Activated CD4-positive, alpha-beta memory T cell treated with anti-CD3 and anti-CD28 coated beads for 36 hours (primary cell): ENCODE measurements at regions of chrX and their contacts with region 1.

Region 1: GRCh38 chrX:71532753-71533425 is at the start of gene OGT:
- DNase-seq: peak; percentile 95
- H3K4me3 Mint-ChIP-seq: peak within 1 kb of the TSS; percentile 97
- H3K27ac Mint-ChIP-seq: peak within 1 kb of the TSS; percentile 98
- H3K4me1 Mint-ChIP-seq: peaks cover 21% of the 10 kb centered on the region
- H3K27me3 Mint-ChIP-seq: no peaks in the 10 kb centered on the region
- total RNA-seq, gene OGT: 280 to 304 TPM

Region 2: DNA sequence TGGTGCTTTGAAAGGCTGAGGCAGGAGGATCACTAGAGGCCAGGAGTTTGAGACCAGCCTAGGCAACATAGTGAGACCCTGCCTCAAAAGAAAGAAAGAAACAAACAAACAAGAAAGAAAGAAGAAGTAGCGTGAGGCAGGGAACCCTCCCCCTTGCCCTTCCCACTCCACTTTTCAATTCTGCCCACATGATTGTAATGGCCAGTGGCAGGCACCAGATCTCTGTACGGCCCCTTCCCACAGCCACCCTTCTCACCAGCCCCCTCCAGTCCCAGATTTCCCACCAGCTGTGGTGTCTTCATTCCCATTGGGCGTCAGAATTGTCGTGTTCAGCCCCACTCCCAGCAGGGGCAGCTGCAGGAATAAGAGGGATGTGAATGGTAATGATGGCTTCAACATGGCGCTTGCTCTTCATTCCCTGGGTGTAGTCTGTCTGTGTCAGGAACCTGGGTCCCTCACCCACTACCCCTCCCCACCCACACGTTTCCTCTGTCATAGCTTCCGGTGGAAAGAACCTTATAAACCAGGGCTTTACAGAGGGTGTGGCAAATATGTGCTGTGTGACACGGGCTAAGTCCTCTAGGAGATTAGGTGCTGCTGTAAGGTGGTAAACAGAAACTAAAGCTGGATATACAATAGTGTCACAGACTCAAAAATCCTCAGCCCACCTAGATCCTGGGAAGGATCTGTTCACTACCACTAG is 421.6 kb before region 1 on chrX and contains the start of gene IL2RG:
- CTCF ChIA-PET with region 1: no interaction called
- POLR2A ChIA-PET with region 1: interaction called, 4 read pairs
- intact Hi-C with region 1: loop called (anchors 5 kb)
- DNase-seq: peak; percentile 85
- H3K4me3 Mint-ChIP-seq: peak within 1 kb of the TSS; percentile 99
- H3K27ac Mint-ChIP-seq: peak within 1 kb of the TSS; percentile 98
- H3K4me1 Mint-ChIP-seq: peaks cover 38% of the 10 kb centered on the region
- H3K27me3 Mint-ChIP-seq: no peaks in the 10 kb centered on the region
- total RNA-seq, gene IL2RG: 289 to 290 TPM

Region 3: DNA sequence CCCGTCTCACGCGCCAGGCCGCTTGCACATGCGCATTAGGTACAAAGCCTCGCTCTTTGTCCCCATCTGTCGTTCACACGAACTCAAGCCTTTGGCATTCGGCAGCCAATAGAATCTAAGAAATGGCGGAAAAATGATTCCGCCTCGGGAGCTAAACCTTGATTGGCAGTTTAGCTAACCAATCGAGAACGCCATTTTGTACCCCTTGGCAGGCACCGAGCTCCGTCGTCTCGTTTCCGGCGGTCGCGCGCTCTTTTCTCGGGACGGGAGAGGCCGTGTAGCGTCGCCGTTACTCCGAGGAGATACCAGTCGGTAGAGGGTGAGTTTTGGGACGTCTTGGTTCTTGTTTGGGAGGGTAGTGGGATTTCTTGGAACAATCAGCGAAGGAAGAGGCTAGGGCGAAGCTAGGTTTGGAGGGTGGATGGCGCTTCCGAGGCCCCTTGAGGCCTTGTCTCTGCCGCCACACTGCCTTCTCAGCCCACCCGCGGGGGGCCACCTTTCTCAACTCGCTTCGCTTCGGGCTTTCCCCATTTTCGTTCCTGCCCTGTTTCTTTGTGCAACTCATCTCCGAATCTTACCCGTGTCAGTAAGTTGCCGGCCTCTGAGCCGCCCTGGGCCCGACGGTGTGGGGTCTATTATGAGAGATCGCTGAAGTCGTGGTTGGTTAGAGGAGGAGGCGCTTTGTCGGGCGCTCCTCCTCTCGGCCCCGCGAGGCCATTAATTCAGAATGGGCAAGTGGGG is 249.3 kb before region 1 on chrX and contains the start of gene NONO:
- CTCF ChIA-PET with region 1: no interaction called
- POLR2A ChIA-PET with region 1: interaction called, 19 read pairs
- intact Hi-C with region 1: loop called (anchors 2 kb)
- DNase-seq: peak; percentile 85
- H3K4me3 Mint-ChIP-seq: peak within 1 kb of the TSS; percentile 98
- H3K27ac Mint-ChIP-seq: peak within 1 kb of the TSS; percentile 100
- H3K4me1 Mint-ChIP-seq: peaks cover 10% of the 10 kb centered on the region
- H3K27me3 Mint-ChIP-seq: no peaks in the 10 kb centered on the region
- total RNA-seq, gene NONO: 450 to 460 TPM

Region 4: DNA sequence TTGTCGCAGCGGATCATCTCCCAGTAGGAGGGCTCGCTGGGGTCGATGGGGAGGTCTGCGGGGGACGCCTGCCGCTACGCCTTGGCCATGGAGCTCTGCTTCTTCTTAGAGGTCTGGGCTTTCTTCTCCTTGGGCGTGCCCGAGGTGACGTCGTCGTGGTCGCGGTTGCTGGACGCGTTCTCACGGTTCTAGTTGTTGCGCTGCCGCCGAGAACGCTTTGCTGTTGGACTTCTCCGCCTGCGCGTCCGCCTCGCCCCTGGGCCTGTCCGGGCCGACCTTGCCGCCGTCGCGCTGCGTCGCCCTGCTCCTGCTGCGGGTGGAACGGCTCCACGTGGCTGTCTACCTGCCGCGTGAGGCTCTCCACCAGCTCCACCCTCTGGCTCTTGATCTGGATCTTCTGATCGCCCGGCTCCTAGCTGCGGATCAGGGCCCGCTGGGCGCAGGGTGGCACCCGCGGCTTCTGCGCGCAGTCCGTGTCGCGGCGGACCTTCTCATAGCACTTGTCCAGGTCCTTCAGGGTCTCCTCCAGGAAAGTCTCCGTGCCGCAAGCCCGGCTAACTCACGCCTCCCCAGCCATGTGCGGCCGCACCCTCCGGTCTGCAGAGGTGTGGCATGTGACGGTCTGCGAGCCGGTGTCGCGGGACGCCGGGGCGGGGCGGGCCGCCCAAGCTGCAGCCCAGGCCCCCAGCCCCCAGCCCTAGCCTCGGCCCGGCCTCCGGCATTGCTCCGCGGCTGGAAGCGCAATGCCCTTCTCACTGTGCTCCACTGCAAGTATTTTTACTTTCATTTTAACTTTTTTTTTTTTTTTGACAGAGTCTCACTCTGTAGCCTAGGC is 40.4 kb before region 1 on chrX:
- CTCF ChIA-PET with region 1: no interaction called
- POLR2A ChIA-PET with region 1: interaction called, 9 read pairs
- intact Hi-C with region 1: loop called (anchors 5 kb)
- DNase-seq: peak; percentile 56
- H3K4me3 Mint-ChIP-seq: peak overlapping the region; percentile 75
- H3K27ac Mint-ChIP-seq: peak overlapping the region; percentile 13
- H3K4me1 Mint-ChIP-seq: peaks cover 9% of the 10 kb centered on the region
- H3K27me3 Mint-ChIP-seq: no peaks in the 10 kb centered on the region

Region 5: DNA sequence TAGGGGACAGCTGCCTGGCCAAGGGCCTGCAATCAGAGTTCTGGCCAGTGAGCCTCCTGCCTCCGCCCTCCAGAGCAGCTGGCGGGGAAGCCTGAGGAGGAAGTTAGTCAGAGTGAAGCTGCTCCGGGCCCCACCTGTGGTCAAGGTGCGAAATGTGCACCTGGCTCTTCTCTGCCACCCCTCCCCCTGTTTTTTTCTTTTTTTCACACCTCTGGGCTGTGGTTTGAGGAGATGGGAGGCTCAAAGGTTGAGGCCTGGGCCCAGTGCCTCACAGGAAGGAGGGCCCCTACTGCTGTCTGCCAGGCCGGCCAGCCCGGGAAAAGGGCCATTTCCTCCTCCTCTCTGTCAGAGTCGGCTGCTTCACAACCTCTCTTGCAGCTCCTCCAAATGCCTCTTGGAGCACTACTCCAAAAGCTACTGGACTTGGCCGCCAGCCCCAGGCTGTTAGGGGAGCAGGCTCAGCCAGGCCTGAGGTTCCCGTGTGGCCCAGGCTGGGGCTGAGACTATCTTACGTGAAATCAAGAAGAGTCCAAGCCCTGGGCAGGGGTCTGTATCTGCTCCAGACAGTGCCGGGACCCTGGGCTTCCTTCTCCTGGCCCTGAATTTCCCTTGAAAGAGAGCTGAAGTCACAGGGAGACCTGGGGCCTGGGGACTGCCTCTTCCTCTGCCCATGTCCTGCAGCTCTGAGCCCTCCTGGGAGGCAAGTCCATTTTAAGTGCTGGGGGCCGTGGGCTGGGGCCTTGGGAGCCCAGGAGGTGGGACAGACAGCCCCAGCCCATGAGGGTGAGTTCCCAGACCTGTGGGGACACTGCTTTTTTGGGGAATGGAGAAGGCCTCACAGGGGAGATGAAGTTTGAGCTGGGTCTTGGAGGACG is 89.9 kb after region 1 on chrX:
- CTCF ChIA-PET with region 1: interaction called, 5 read pairs
- POLR2A ChIA-PET with region 1: interaction called, 52 read pairs
- intact Hi-C with region 1: loop called (anchors 1 kb)
- DNase-seq: peak; percentile 85
- H3K4me3 Mint-ChIP-seq: peak overlapping the region; percentile 57
- H3K27ac Mint-ChIP-seq: peak overlapping the region; percentile 92
- H3K4me1 Mint-ChIP-seq: peaks cover 64% of the 10 kb centered on the region
- H3K27me3 Mint-ChIP-seq: no peaks in the 10 kb centered on the region